Activated CD8-positive, alpha-beta T cell treated with anti-CD3 and anti-CD28 coated beads for 36 hours (primary cell): ENCODE measurements at regions of chr2 and their contacts with region 1.

Region 1: DNA sequence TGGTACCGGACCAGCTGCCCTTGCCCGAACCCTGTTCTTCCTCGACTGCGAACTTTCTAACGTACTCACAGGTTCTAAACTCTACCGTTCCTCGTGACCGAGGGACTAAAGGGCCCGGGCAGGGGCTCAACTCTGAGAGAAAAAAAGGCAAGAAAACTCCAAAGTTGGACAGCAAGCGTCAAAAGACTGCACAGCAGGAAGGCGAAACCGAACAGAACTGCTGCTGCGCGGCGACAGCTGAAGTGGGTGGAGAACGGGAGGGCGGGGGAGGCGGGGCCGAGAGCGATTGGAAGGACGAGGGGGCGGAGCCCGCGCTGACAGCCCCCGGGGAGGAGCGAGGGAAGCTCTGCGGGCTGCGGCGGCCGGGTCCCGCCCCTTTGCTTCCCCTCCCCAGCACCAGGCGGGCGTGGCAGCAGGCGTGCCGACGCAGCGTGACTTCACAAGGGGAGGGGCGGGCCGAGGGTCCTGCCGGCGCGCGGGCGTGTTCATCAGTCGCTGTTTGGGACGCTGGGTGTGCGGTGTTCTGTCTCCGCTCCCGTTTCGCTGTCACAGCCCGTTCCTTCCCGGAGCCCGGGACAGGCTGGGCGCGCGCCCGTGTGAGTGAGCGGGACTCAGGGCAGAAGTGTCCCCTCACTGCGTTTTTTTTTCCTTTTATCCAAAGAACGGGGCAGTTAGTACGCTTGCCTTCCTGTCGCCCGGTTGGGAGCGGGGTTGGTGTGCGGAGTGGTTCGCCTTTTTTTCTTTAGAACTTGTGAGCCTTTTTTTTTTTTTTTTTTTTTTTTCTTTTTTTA is at the start of gene NABP1:
- DNase-seq: peak; percentile 99
- ATAC-seq: peak; percentile 87
- H3K4me3 Mint-ChIP-seq: peak within 1 kb of the TSS; percentile 100
- H3K27ac Mint-ChIP-seq: peak within 1 kb of the TSS; percentile 99
- H3K4me1 Mint-ChIP-seq: peaks cover 53% of the 10 kb centered on the region
- H3K27me3 Mint-ChIP-seq: no peaks in the 10 kb centered on the region
- CTCF ChIP-seq: no peak
- total RNA-seq, gene NABP1: 30.5 to 31.7 TPM

Region 2: DNA sequence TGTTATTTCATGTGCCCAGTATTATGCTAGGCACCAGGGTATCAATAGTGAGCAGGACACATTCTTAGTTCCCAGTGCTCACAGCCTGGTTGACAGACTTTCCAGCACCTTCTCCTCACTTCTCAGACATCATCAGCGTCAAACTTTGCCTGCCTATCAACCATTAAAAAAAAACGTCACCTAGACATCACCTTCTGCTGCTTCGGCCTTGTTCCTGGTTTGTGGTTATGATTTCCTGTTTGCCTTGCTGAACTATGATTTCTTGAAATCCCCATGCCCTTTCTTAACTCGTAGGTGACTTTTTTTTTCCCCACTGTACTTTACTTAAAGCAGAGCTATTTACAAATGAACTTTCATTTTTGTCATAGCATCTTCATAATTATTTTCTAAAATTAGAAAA is 60.3 kb before region 1 on chr2:
- CTCF ChIA-PET with region 1: interaction called, 5 read pairs
- POLR2A ChIA-PET with region 1: interaction called, 21 read pairs
- intact Hi-C with region 1: loop called (anchors 2 kb)
- DNase-seq: peak; percentile 65
- ATAC-seq: peak; percentile 85
- H3K4me3 Mint-ChIP-seq: peak overlapping the region; percentile 18
- H3K27ac Mint-ChIP-seq: peak overlapping the region; percentile 99
- H3K4me1 Mint-ChIP-seq: peaks cover 60% of the 10 kb centered on the region
- H3K27me3 Mint-ChIP-seq: no peaks in the 10 kb centered on the region
- CTCF ChIP-seq: no peak

Region 3: GRCh38 chr2:191625016-191625415 is 52.8 kb before region 1 on chr2:
- CTCF ChIA-PET with region 1: interaction called, 7 read pairs
- POLR2A ChIA-PET with region 1: interaction called, 21 read pairs
- intact Hi-C with region 1: no loop called
- DNase-seq: peak; percentile 55
- ATAC-seq: peak; percentile 76
- H3K4me3 Mint-ChIP-seq: no peak overlapping the region
- H3K27ac Mint-ChIP-seq: peak overlapping the region; percentile 73
- H3K4me1 Mint-ChIP-seq: peaks cover 54% of the 10 kb centered on the region
- H3K27me3 Mint-ChIP-seq: no peaks in the 10 kb centered on the region
- CTCF ChIP-seq: no peak

Region 4: DNA sequence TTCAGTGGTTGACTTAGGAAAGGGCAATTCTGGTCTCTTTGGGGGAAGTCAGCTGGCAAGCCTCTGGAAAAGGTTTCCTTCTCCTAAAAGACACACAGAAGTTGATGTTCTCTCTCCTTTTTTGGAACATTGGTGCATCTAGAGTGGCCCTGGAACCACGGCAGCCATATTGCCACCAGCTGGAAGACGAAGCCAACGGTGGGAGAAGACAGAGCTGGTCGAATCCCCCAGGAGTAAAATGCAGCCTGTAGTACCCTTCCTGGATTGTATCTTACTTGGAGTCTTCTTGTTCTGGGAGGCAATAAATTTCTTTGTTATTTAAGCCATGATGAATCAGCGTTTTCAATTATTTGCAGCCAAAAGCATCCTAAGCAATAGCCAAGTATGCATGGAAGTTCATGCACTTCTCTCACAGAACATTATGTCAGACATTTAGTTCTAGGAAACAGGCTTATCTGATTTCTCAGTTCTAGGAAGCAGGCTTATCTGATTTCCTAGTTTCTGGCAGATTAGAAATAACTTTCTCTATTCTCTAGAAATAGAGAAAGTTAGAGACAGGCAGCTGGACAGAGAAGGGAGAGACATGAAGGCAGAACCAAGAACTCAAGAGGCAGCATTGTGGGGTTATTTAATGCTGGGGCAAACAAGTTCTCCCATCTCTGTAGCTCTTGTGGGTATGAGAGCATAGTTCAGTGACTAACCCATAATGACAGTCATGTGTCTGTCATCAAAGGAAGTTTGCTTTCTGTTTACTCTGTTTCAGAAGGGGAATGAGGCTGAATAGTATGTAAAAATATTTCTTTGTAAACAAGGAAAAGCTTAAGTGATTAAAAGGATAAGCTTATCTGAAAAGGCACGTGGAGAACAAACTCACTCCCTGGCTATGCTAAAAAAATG is 40.4 kb before region 1 on chr2:
- CTCF ChIA-PET with region 1: interaction called, 18 read pairs
- POLR2A ChIA-PET with region 1: interaction called, 54 read pairs
- intact Hi-C with region 1: loop called (anchors 2 kb)
- DNase-seq: peak; percentile 28
- ATAC-seq: peak; percentile 83
- H3K4me3 Mint-ChIP-seq: peak overlapping the region; percentile 9
- H3K27ac Mint-ChIP-seq: peak overlapping the region; percentile 87
- H3K4me1 Mint-ChIP-seq: peaks cover 50% of the 10 kb centered on the region
- H3K27me3 Mint-ChIP-seq: no peaks in the 10 kb centered on the region
- CTCF ChIP-seq: no peak

Region 5: DNA sequence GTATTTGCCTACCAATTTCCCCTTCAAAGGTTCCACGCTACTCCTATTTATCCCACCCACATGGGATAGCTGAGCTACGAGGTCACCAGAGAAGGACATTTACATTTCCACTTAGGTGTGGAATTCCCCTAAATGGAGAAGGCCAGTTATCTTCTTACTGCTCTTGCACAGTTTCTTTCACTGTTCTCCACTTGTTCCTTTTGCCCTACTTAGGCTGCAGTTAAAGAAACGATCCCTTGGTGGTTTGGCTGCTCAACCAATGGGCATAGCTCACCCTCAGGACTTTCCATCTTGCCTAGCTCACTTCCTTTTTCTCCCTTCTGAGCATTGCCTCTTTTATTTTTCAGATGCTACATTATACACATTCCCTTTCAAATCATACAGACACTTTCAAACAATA is 11.1 kb before region 1 on chr2:
- CTCF ChIA-PET with region 1: interaction called, 8 read pairs
- POLR2A ChIA-PET with region 1: interaction called, 24 read pairs
- intact Hi-C with region 1: no loop called
- DNase-seq: peak; percentile 19
- ATAC-seq: peak; percentile 79
- H3K4me3 Mint-ChIP-seq: no peak overlapping the region
- H3K27ac Mint-ChIP-seq: no peak overlapping the region
- H3K4me1 Mint-ChIP-seq: peaks cover 23% of the 10 kb centered on the region
- H3K27me3 Mint-ChIP-seq: no peaks in the 10 kb centered on the region
- CTCF ChIP-seq: no peak

Region 6: DNA sequence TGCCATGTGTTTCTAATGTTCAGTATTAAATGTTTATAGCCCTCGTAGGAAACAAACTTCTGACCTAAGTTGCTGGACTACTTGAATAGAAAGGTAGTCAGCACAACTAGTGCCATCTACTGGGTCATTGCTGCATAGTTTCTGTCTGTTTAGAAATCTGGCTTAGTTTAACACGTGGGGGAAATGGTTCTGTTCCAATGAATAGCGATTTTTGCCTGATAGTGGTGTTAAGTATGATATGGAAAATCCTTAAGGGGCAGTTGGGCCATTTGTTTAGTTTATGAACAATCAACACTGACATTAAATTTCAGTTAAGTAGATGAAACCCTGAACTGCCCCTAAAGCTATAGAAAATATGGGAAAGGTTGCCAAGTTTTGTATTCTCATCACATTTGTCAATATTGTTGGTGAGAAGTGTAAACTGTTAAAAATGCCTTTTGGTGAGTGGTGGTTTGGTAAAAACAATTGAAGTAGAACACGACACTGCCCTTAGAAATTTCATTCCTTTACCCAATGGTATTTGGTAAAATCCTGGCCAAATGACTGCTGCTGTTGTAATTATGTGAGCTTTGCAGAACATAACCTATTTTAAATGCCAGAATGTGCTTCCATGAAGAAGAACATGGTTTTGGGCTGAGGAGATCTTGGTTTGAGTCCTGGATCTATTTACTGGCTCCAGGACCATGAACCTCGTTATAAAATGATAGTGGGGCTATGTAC is 13.3 kb after region 1 on chr2:
- CTCF ChIA-PET with region 1: interaction called, 12 read pairs
- POLR2A ChIA-PET with region 1: interaction called, 19 read pairs
- intact Hi-C with region 1: no loop called
- DNase-seq: peak; percentile 72
- ATAC-seq: peak; percentile 74
- H3K4me3 Mint-ChIP-seq: no peak overlapping the region
- H3K27ac Mint-ChIP-seq: no peak overlapping the region
- H3K4me1 Mint-ChIP-seq: peaks cover 57% of the 10 kb centered on the region
- H3K27me3 Mint-ChIP-seq: no peaks in the 10 kb centered on the region
- CTCF ChIP-seq: peak; percentile 60